ENCODE measurements at regions of chr3 and their contacts with region 1.

Region 1: GRCh38 chr3:4978204-4978965 is 852 bp upstream of the BHLHE40 start:
- DNase-seq: peak; percentile 89
- H3K4me3 Mint-ChIP-seq: peak overlapping the region; percentile 91
- H3K27ac Mint-ChIP-seq: peak overlapping the region; percentile 100
- H3K4me1 Mint-ChIP-seq: peaks cover 36% of the 10 kb centered on the region
- H3K27me3 Mint-ChIP-seq: no peaks in the 10 kb centered on the region

Region 2: DNA sequence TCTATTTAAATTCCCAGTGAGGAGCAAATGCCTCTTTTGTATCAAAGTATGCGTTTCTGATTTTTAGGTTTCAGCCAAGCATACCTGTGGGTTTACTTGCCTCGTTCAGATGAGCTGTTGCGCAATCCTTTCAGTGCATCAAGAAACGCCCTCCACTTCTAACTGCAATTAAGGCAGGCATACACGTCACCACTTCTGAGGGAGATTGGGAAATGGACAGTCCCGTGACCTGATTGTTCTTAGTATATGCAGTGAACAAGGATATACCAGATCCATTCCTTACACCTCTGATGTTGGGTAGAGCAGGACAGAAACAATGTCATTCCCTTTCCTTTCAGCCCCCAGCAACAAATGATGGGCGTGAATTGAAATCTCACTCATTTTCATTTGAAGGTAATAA is 266.2 kb before region 1 on chr3:
- intact Hi-C with region 1: loop called (anchors 1 kb)
- DNase-seq: no peak
- H3K4me3 Mint-ChIP-seq: no peak overlapping the region
- H3K27ac Mint-ChIP-seq: peak overlapping the region; percentile 32
- H3K4me1 Mint-ChIP-seq: peaks cover 61% of the 10 kb centered on the region
- H3K27me3 Mint-ChIP-seq: no peaks in the 10 kb centered on the region

Region 3: GRCh38 chr3:4804161-4805058 is 174.0 kb before region 1 on chr3:
- intact Hi-C with region 1: loop called (anchors 1 kb)
- DNase-seq: no peak
- H3K4me3 Mint-ChIP-seq: no peak overlapping the region
- H3K27ac Mint-ChIP-seq: peak overlapping the region; percentile 76
- H3K4me1 Mint-ChIP-seq: peaks cover 59% of the 10 kb centered on the region
- H3K27me3 Mint-ChIP-seq: no peaks in the 10 kb centered on the region

Region 4: GRCh38 chr3:4888913-4889846 is 89.2 kb before region 1 on chr3:
- intact Hi-C with region 1: loop called (anchors 1 kb)
- DNase-seq: peak; percentile 50
- H3K4me3 Mint-ChIP-seq: peak overlapping the region; percentile 58
- H3K27ac Mint-ChIP-seq: peak overlapping the region; percentile 88
- H3K4me1 Mint-ChIP-seq: peaks cover 59% of the 10 kb centered on the region
- H3K27me3 Mint-ChIP-seq: no peaks in the 10 kb centered on the region

Region 5: DNA sequence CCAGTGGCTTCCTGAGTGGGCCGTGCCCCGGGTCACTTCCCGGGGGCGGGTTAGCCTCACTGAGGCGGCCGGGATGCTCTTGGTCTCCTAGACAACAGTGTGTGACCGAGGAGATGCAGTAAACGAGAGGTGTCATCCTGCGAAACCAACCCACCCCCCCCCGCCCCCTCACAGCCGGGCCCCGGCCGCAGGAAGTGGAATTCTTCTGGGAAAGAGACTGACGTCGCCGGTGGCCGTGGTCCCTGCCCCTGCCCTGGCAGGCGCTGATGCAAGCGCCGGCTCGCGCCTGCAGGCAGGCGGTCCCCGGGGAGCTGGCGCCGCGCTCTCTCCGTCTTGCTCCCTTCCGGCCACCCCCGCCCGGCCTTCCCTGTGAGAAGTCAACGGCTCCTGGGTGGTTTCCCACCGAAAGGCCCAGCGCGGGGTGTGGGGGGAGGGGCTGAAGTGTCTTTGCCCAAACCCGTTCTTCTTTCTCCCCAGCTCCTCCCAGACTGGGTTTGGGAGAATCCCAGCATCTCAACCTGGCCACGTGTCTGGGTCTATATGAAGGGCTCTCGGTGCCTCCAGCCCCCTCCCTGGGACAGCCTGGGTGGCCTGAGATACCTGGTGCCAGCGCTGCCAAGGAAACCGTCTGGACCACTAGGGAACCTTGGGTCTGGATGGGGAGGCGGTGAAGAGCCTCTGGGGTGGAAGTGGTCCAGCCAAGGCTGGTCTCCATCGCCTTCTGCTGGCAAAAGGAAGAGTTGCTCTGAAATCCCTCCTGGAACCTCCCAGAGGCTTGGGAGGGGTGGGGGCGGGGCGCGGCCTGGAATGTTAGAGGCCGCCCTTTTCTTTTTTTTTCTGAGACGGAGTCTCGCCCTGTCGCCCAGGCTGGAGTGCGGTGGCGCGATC is 48.2 kb after region 1 on chr3:
- intact Hi-C with region 1: loop called (anchors 1 kb)
- DNase-seq: peak; percentile 59
- H3K4me3 Mint-ChIP-seq: peak overlapping the region; percentile 81
- H3K27ac Mint-ChIP-seq: peak overlapping the region; percentile 95
- H3K4me1 Mint-ChIP-seq: peaks cover 70% of the 10 kb centered on the region
- H3K27me3 Mint-ChIP-seq: no peaks in the 10 kb centered on the region

Region 6: DNA sequence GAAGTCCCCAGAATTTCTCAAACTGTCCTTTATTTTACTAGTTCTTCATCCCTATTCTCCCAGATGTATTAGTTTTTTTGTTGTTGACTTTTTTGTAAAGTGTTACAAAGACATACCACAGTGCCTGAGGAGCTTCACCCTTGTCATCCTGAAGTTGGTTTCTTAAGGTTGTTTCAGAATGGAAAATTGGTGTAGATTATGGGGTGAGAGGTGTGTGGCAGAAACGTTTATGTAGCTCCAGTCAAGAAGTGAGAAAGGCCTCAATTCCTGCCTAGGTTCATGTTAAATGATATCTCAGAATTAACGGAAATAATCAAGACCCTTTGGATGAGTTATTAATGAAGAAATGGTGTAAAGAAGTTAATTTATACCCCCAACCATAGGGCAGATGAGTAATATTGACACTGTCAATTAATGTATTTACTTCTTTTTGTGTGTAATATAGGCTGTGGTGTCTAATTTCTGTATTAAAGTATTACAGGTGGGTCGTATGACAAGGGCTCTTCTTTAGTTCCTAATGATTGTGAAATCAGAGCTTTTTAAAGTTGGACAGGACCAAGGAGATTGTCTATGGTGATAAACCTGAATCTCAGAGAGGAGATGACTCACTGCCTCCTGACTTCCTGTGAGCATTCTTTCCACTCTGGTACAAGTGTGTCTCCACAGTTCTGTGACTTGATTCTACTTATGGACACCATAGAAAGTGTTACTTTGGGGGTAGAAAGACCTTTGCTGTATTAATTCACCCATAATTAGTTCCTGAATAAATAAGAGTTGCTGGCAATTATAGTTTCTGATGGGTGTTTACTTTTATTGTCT is 216.2 kb after region 1 on chr3:
- intact Hi-C with region 1: loop called (anchors 2 kb)
- DNase-seq: peak; percentile 54
- H3K4me3 Mint-ChIP-seq: peak overlapping the region; percentile 74
- H3K27ac Mint-ChIP-seq: peak overlapping the region; percentile 97
- H3K4me1 Mint-ChIP-seq: peaks cover 88% of the 10 kb centered on the region
- H3K27me3 Mint-ChIP-seq: no peaks in the 10 kb centered on the region

Region 7: DNA sequence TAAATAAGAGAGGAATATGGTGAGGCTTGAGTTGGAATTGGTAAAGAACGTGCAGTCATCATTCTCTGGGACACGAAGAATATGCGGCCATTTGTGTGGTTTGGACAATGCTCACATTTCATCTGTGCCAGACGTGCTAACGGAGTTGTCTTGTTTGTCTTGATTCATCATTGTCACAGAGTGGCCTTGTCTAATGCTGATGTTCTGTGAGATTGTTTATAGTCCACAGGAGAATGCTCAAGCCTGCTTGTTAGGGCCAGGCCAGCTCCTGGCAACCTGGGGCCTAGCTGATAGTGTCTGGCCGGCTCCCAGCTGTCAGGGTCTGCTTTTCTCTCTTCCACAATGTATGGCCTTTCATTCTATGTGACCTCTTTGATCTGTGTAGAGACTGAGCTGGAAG is 593.8 kb after region 1 on chr3:
- intact Hi-C with region 1: no loop called
- DNase-seq: no peak
- H3K4me3 Mint-ChIP-seq: no peak overlapping the region
- H3K27ac Mint-ChIP-seq: no peak overlapping the region
- H3K4me1 Mint-ChIP-seq: no peaks in the 10 kb centered on the region
- H3K27me3 Mint-ChIP-seq: no peaks in the 10 kb centered on the region

Measured in activated T-helper 1 cell treated with anti-CD3 and anti-CD28 coated beads, Interleukin-12 subunit alpha, Interleukin-12 subunit beta, Interleukin-2, Interleukin-4 antibody, amounts not matched to agents 30 ng/mL and 10 ng/mL and 1 ng/mL, durations not matched to agents 14 hours and 24 hours and 36 hours (primary cell).